B cell (primary cell): ENCODE measurements at regions of chr1 and their contacts with region 1.

Region 1: DNA sequence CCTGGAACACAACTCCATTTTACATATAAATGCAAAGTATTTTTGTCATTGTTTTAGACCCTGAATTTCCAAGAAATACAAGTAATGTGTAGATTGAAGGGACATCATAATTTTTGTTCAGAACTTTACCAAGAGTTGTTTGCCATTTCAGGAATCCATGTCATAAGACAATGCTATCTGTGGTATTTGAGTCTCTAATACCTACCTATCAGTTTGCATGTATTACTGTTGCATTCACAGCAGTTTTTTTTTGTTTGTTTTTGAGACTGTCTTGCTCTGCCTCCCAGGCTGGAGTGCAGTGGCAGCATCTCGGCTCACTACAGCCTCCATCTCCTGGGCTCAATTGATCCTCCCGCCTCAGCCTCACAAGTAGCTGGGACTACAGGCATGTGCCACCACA is 17.1 kb downstream of the MPZ start:
- DNase-seq: no peak
- ATAC-seq: no peak
- H3K4me3 ChIP-seq: no peak overlapping the region
- H3K4me3 Mint-ChIP-seq: no peak overlapping the region
- H3K27ac ChIP-seq: no peak overlapping the region
- H3K27ac Mint-ChIP-seq: no peak overlapping the region
- H3K4me1 ChIP-seq: no peaks in the 10 kb centered on the region
- H3K4me1 Mint-ChIP-seq: peaks cover 6% of the 10 kb centered on the region
- H3K27me3 ChIP-seq: no peaks in the 10 kb centered on the region
- H3K27me3 Mint-ChIP-seq: no peaks in the 10 kb centered on the region
- CTCF ChIP-seq: no peak

Region 2: GRCh38 chr1:161192476-161193465 is 99.9 kb before region 1 on chr1:
- CTCF ChIA-PET with region 1: interaction called, 9 read pairs
- POLR2A ChIA-PET with region 1: no interaction called
- intact Hi-C with region 1: loop called (anchors 2 kb)
- DNase-seq: peak; percentile 83
- ATAC-seq: peak; percentile 91
- H3K4me3 ChIP-seq: no peak overlapping the region
- H3K4me3 Mint-ChIP-seq: no peak overlapping the region
- H3K27ac ChIP-seq: no peak overlapping the region
- H3K27ac Mint-ChIP-seq: peak overlapping the region; percentile 72
- H3K4me1 ChIP-seq: peaks cover 56 to 71% of the 10 kb centered on the region in 2 donors
- H3K4me1 Mint-ChIP-seq: peaks cover 56% of the 10 kb centered on the region
- H3K27me3 ChIP-seq: no peaks in the 10 kb centered on the region
- H3K27me3 Mint-ChIP-seq: no peaks in the 10 kb centered on the region
- CTCF ChIP-seq: peak; percentile 92

Region 3: DNA sequence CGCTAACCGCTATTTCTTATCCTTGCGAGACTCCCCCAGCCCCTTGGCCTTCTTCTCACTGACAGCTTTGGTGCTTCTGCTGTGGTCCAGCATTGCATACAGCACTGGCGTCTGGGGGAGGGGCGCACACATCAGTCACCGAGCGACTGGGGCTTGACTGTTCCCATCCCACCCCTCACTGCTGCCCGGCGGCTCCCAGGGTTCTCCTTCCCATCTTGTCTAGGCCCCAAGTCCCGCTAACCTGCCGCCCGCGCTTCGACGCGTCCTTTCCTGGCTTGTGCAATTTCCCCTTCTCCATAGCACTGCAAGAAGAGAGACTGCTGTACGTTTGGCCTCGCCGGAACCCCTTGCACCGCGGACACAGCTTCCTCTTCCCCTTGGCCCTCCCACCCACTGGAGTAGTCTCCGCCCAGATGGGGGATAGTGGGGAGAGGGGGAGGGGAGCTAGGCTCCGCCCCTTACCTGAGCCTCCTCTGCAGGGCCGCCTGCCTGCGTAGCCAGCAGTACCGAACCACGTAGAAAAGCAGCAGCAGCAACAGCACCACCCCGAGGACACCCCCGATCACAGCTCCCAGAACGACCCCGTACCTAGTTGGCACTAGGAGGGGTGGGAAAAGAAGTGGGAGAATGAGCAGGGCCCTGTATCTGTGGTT is 13.4 kb after region 1 on chr1:
- CTCF ChIA-PET with region 1: interaction called, 20 read pairs
- POLR2A ChIA-PET with region 1: no interaction called
- intact Hi-C with region 1: no loop called
- DNase-seq: peak; percentile 93
- ATAC-seq: peak; percentile 89
- H3K4me3 ChIP-seq: peak overlapping the region; percentile 66 to 91 (median 80)
- H3K4me3 Mint-ChIP-seq: peak overlapping the region; percentile 97
- H3K27ac ChIP-seq: peak overlapping the region; percentile 59 to 72
- H3K27ac Mint-ChIP-seq: peak overlapping the region; percentile 93
- H3K4me1 ChIP-seq: peaks cover 26% of the 10 kb centered on the region in 2 donors
- H3K4me1 Mint-ChIP-seq: peaks cover 42% of the 10 kb centered on the region
- H3K27me3 ChIP-seq: no peaks in the 10 kb centered on the region
- H3K27me3 Mint-ChIP-seq: no peaks in the 10 kb centered on the region
- CTCF ChIP-seq: peak; percentile 49